ENCODE measurements at regions of chr15 and their contacts with region 1.

Region 1: GRCh38 chr15:78034495-78035191 is 42.9 kb downstream of the TBC1D2B start:
- DNase-seq: peak; percentile 87
- H3K4me3 Mint-ChIP-seq: peak overlapping the region; percentile 43
- H3K27ac Mint-ChIP-seq: peak overlapping the region; percentile 87
- H3K4me1 Mint-ChIP-seq: peaks cover 92% of the 10 kb centered on the region
- H3K27me3 Mint-ChIP-seq: no peaks in the 10 kb centered on the region

Region 2: GRCh38 chr15:78018946-78019644 is 15.5 kb before region 1 on chr15:
- CTCF ChIA-PET with region 1: interaction called, 6 read pairs
- POLR2A ChIA-PET with region 1: interaction called, 16 read pairs
- DNase-seq: no peak
- H3K4me3 Mint-ChIP-seq: no peak overlapping the region
- H3K27ac Mint-ChIP-seq: peak overlapping the region; percentile 23
- H3K4me1 Mint-ChIP-seq: peaks cover 22% of the 10 kb centered on the region
- H3K27me3 Mint-ChIP-seq: no peaks in the 10 kb centered on the region

Region 3: DNA sequence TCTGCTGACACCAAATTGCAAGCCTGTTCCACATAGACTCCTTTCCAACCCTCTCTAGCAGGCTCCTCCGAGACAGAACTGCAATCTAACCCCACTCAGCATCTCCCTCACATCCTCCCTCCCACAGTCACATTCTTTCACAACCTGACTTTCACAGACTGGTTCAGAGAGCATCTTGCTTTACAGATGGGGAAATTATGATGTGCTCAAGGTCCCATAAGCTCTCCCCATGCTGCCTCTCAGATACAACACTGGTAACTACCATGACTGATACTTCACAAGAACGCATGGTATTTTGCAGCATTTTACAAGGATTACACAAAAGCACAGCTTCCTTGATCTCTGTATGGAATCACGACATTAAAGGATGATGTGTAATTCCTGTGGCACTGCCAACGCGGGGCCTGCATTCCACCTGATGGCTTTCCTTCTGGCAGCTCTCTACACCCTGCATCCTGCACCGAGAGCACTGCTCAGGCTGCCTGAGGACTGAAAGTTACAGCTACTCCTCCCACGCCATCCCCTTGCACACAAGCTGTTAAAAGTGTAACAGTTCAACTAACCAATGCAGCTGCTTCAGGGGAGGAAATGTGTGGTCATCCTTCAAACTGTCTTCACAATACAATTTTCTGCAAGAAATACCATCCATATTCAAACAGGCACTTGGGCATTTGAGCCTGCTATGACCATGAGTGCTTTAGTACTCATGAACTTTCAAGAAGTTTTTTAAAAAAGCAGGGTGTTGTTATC is 15.2 kb after region 1 on chr15:
- CTCF ChIA-PET with region 1: interaction called, 18 read pairs
- POLR2A ChIA-PET with region 1: interaction called, 157 read pairs
- DNase-seq: peak; percentile 75
- H3K4me3 Mint-ChIP-seq: peak overlapping the region; percentile 54
- H3K27ac Mint-ChIP-seq: peak overlapping the region; percentile 91
- H3K4me1 Mint-ChIP-seq: peaks cover 96% of the 10 kb centered on the region
- H3K27me3 Mint-ChIP-seq: no peaks in the 10 kb centered on the region

Region 4: GRCh38 chr15:78061963-78062435 is 27.4 kb after region 1 on chr15:
- CTCF ChIA-PET with region 1: interaction called, 5 read pairs
- POLR2A ChIA-PET with region 1: interaction called, 157 read pairs
- DNase-seq: no peak
- H3K4me3 Mint-ChIP-seq: peak overlapping the region; percentile 58
- H3K27ac Mint-ChIP-seq: peak overlapping the region; percentile 79
- H3K4me1 Mint-ChIP-seq: peaks cover 39% of the 10 kb centered on the region
- H3K27me3 Mint-ChIP-seq: no peaks in the 10 kb centered on the region

Region 5: DNA sequence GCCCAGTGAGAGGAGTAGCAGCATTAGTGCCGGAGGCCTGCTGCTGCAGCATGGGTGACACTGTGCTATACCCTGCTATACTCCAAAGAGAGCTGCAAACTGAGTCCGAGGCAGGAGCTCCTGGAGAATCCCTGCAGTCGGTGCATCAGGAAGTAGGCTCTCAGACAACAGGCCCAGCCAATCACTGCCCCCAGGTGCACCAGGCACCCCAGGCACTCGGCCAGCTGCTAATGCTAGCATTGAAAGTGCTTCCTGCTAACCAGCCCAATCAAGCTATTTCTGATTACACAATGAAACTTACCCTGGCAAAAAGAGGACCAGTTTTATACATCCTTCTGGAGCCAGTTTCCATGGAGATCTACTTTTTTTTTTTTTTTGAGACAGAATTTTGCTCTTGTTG is 357.8 kb after region 1 on chr15:
- CTCF ChIA-PET with region 1: no interaction called
- POLR2A ChIA-PET with region 1: no interaction called
- DNase-seq: no peak
- H3K4me3 Mint-ChIP-seq: no peak overlapping the region
- H3K27ac Mint-ChIP-seq: no peak overlapping the region
- H3K4me1 Mint-ChIP-seq: peaks cover 4% of the 10 kb centered on the region
- H3K27me3 Mint-ChIP-seq: peaks cover 13% of the 10 kb centered on the region

Measured in activated CD4-positive, alpha-beta memory T cell treated with anti-CD3 and anti-CD28 coated beads, Interleukin-2, amount 10 ng/mL, durations not matched to agents 7 days and 5 days (primary cell).